ENCODE measurements at regions of chr10 and their contacts with region 1.

Region 1: DNA sequence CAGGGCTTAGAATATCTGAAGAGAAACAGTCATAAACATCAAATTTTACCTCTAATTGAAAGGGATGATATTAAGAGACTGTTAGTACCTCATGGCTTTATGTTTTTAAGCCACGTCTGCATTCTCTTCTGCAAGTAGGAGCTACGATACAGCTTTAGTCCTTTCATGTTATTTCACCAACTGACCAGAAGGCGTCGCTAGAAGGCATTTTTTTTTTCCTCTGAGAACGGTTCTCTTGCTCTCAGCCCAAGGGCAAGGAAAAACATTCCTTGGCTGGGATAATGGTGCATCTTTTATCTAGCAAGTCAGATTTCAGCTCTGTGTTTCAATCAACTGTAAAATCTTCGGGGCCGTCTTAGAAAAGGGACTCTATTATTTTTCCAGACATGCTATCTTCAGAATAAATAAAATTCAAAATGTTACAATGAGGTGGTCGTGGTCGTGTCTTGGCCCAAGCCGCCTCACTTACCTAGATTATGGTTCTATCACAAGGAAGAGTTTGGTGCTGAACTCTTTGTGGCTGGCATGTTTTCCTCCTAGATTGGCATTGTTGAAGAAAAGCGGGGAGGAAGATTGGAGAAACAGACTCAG is 41.6 kb upstream of the LYZL2 start:
- DNase-seq: peak; percentile 58 to 68
- H3K4me3 ChIP-seq: no peak overlapping the region
- H3K4me3 Mint-ChIP-seq: no peak overlapping the region
- H3K27ac Mint-ChIP-seq: no peak overlapping the region
- H3K4me1 ChIP-seq: no peaks in the 10 kb centered on the region; the same call in 1 of the 2 replicates
- H3K4me1 Mint-ChIP-seq: no peaks in the 10 kb centered on the region
- H3K27me3 ChIP-seq: no peaks in the 10 kb centered on the region
- H3K27me3 Mint-ChIP-seq: peaks cover 12% of the 10 kb centered on the region
- CTCF ChIP-seq: peak; percentile 81 to 86

Region 2: GRCh38 chr10:30687698-30688219 is 16.6 kb after region 1 on chr10:
- CTCF ChIA-PET with region 1: interaction called, 18 read pairs
- POLR2A ChIA-PET with region 1: no interaction called
- intact Hi-C with region 1: loop called (anchors 1 kb)
- DNase-seq: peak; percentile 82 to 92
- H3K4me3 ChIP-seq: no peak overlapping the region
- H3K4me3 Mint-ChIP-seq: no peak overlapping the region
- H3K27ac Mint-ChIP-seq: no peak overlapping the region
- H3K4me1 ChIP-seq: no peaks in the 10 kb centered on the region; the same call in 1 of the 2 replicates
- H3K4me1 Mint-ChIP-seq: no peaks in the 10 kb centered on the region
- H3K27me3 ChIP-seq: no peaks in the 10 kb centered on the region; the same call in 1 of the 2 replicates
- H3K27me3 Mint-ChIP-seq: peaks cover 28% of the 10 kb centered on the region
- CTCF ChIP-seq: peak; percentile 90 to 98